ENCODE measurements at regions of chr19 and their contacts with region 1.

Region 1: DNA sequence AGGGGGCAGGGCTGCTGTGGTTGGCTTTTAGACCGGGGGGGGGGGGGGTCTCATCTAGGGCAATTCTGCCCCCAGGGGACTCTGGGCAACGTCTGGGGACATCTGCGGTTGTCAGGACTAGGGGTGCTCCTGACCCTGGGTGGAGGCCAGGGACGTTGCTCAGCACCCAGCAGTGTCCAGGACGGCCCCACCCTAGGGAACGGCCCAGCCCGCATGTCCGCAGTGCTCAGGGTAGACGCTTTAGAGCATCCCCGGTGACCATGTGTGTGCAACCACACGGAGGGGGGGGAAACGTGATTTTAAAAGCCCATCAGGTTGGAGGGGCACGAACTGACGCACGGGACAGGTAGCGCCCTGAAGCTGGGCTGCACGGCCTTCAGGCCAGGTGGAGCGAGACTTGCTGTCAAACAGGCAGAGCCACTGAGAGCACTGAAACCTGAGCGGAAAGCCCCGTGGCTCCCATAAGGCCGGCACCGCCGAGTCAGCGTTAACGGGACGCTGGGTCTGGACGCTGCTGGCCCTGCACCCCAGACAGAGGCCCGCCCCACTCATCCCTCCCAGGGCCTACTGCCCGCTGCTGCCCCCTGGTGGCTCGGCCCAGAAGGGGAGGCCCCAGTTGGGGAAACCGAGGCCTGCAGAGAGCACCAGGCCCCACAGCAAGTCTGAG is 8.3 kb downstream of the CACTIN start:
- DNase-seq: peak; percentile 64 to 77
- ATAC-seq: peak; percentile 72 to 93 (median 88)
- H3K4me3 ChIP-seq: peak overlapping the region in 8 of 10 donors; percentile 16 to 45 (median 36)
- H3K27ac ChIP-seq: peak overlapping the region in 8 of 10 donors; percentile 15 to 74 (median 56)
- H3K4me1 ChIP-seq: peaks cover 0 to 20% (median 14%) of the 10 kb centered on the region in 9 donors
- H3K27me3 ChIP-seq: no peaks in the 10 kb centered on the region
- CTCF ChIP-seq: peak; percentile 88 to 99 (median 96)

Region 2: GRCh38 chr19:3304871-3305423 is 313.3 kb before region 1 on chr19:
- intact Hi-C with region 1: loop called in 2 of 10 experiments (anchors 5 to 10 kb)
- DNase-seq: peak; percentile 67 to 72
- ATAC-seq: peak in 7 of 8 donors; percentile 43 to 69 (median 58)
- H3K4me3 ChIP-seq: no peak overlapping the region
- H3K27ac ChIP-seq: no peak overlapping the region
- H3K4me1 ChIP-seq: peaks cover 0 to 9% (median 4%) of the 10 kb centered on the region in 9 donors
- H3K27me3 ChIP-seq: peaks cover 0 to 71% (median 47%) of the 10 kb centered on the region in 7 donors
- CTCF ChIP-seq: peak; percentile 83 to 91 (median 89)

Region 3: DNA sequence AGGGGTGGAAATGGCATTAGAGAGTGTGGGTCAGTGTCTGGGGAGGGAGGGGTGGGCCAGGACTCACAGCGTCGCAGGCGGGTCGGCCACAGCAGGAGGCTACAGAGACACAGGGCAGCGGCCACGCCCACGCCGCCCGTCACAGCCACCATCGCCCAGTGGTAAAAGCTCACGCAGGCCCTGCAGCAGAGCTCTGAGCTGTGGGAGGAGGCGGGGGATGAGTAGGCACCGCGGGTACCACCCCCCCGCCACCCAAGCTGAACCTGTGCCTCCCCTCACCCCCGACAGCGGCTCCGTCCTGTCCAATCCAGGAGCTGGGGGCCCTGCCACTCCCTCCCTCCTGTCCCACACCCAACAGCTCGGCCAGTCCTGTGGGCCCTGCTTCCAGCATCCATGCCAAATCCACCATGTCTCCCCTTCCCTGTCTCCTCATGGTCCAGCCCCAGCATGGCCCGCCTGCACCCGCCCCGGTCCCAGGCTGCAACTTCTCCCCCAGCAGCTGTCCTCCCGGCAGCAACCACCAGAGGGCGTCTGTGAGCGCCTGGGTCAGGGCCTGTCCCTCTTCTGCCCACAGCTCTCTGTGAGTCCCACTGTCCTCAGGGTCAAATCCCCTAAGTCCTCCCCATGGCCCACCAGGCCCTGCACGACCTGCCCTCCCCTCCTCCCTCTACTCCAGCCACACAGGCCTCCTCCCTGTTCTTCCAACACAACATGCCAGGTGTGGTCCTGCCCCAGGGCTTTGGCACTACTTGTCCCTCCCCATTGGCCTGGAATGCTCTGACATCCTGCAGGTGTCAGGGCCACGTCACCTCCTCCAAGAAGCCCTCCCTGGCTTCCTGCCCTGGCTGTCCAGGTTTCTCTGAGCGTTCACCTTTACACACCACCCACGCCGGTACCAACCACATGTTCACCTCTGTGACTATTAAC is 73.3 kb before region 1 on chr19:
- intact Hi-C with region 1: loop called (anchors 1 to 10 kb)
- DNase-seq: peak; percentile 64 to 83
- ATAC-seq: peak; percentile 51 to 72 (median 68)
- H3K4me3 ChIP-seq: no peak overlapping the region
- H3K27ac ChIP-seq: no peak overlapping the region
- H3K4me1 ChIP-seq: peaks cover 0 to 17% (median 0%) of the 10 kb centered on the region in 9 donors
- H3K27me3 ChIP-seq: no peaks in the 10 kb centered on the region
- CTCF ChIP-seq: peak; percentile 87 to 98 (median 92)

Region 4: DNA sequence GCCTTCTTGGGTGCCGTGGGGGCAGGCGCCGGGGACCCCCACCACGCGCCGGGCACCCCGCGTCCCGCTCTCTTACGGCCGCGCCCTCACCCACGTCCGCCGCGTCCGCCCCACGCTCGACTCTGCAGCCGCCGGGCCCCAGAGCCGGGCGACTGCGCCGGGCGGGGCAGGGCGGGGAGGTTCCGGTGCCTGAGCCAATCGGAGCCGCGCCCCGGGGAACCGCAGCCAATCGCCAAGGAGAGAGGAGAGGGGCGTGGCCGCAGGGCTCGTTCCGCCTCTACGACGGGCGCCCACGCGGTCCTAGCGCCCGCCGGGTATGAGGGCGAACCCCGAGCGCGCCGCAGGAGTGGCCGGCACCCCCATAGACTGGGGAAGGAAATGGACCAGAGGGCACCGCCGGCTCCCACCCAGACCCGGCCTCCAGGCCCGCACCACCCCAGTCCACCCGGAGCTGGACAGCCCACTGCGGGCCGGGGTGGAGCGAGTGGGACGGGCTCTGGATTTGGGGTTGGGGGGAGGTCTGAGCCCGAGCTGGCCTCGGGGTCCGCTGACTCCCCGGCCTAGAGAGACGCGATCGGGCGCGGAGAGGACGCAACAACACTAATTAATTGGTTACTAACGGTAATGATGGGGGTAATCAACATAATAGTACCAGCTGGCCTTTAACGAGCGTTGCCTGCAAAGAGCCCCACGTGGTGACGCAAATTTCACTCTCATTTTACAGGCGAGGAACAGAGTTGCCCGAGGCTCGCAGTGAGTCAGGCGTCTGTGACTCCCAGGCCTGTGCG is 60.6 kb before region 1 on chr19 and contains the start of gene MFSD12:
- intact Hi-C with region 1: loop called in 1 of 10 experiments (anchors 5 kb)
- DNase-seq: peak; percentile 94 to 95
- ATAC-seq: peak; percentile 97 to 99 (median 98)
- H3K4me3 ChIP-seq: peak within 1 kb of the TSS; percentile 62 to 96 (median 89)
- H3K27ac ChIP-seq: peak within 1 kb of the TSS in 9 of 10 donors; percentile 54 to 90 (median 81)
- H3K4me1 ChIP-seq: peaks cover 10 to 52% (median 49%) of the 10 kb centered on the region in 9 donors
- H3K27me3 ChIP-seq: no peaks in the 10 kb centered on the region
- CTCF ChIP-seq: no peak
- total RNA-seq, gene MFSD12: 11.6 to 41.3 (median 21.0) TPM

Region 5: GRCh38 chr19:3580156-3580934 is 37.9 kb before region 1 on chr19:
- intact Hi-C with region 1: loop called in 4 of 10 experiments (anchors 5 to 10 kb)
- DNase-seq: no peak
- ATAC-seq: peak in 1 of 8 donors; percentile 34
- H3K4me3 ChIP-seq: no peak overlapping the region
- H3K27ac ChIP-seq: peak overlapping the region in 2 of 10 donors; percentile 2 to 6
- H3K4me1 ChIP-seq: peaks cover 4 to 21% (median 11%) of the 10 kb centered on the region in 9 donors
- H3K27me3 ChIP-seq: peaks cover 4 to 17% (median 13%) of the 10 kb centered on the region in 7 donors
- CTCF ChIP-seq: no peak

Region 6: GRCh38 chr19:3586124-3586626 is 32.1 kb before region 1 on chr19:
- intact Hi-C with region 1: loop called in 7 of 10 experiments (anchors 1 to 5 kb)
- DNase-seq: no peak
- ATAC-seq: peak in 7 of 8 donors; percentile 10 to 74 (median 34)
- H3K4me3 ChIP-seq: peak overlapping the region; percentile 12 to 62 (median 54)
- H3K27ac ChIP-seq: peak overlapping the region in 6 of 10 donors; percentile 15 to 75 (median 45)
- H3K4me1 ChIP-seq: peaks cover 0 to 20% (median 11%) of the 10 kb centered on the region in 9 donors
- H3K27me3 ChIP-seq: peaks cover 11 to 33% (median 21%) of the 10 kb centered on the region in 7 donors
- CTCF ChIP-seq: peak; percentile 26 to 73 (median 59)

Measured in heart right ventricle (tissue), 16 donors.